GM12878 (cell line): ENCODE measurements at regions of chr5 and their contacts with region 1.

Region 1: GRCh38 chr5:38193015-38193581 is 65.3 kb upstream of the EGFLAM start:
- DNase-seq: no peak
- ATAC-seq: peak; percentile 86
- H3K4me3 ChIP-seq: no peak overlapping the region
- H3K27ac ChIP-seq: no peak overlapping the region
- H3K4me1 ChIP-seq: no peaks in the 10 kb centered on the region
- H3K27me3 ChIP-seq: no peaks in the 10 kb centered on the region; a peak in 2 of 4 replicates
- CTCF ChIP-seq: peak; percentile 86 to 91 (median 87)
- EP300 ChIP-seq: no peak
- POLR2A ChIP-seq: no peak
- RAD21 ChIP-seq: peak; percentile 90

Region 2: GRCh38 chr5:37774912-37775483 is 418.1 kb before region 1 on chr5:
- CTCF ChIA-PET with region 1: interaction called, 11 read pairs
- POLR2A ChIA-PET with region 1: no interaction called
- RAD21 ChIA-PET with region 1: no interaction called
- SMC1A ChIA-PET with region 1: interaction called, 4 read pairs
- in situ Hi-C with region 1: no loop called
- intact Hi-C with region 1: loop called (anchors 2 kb)
- DNase-seq: peak; percentile 5
- ATAC-seq: no peak
- H3K4me3 ChIP-seq: no peak overlapping the region
- H3K27ac ChIP-seq: no peak overlapping the region
- H3K4me1 ChIP-seq: no peaks in the 10 kb centered on the region
- H3K27me3 ChIP-seq: no peaks in the 10 kb centered on the region
- CTCF ChIP-seq: peak; percentile 31 to 67 (median 56)
- EP300 ChIP-seq: no peak
- POLR2A ChIP-seq: no peak
- RAD21 ChIP-seq: peak; percentile 42

Region 3: GRCh38 chr5:37831821-37832534 is 361.1 kb before region 1 on chr5:
- CTCF ChIA-PET with region 1: interaction called, 52 read pairs
- POLR2A ChIA-PET with region 1: no interaction called
- RAD21 ChIA-PET with region 1: interaction called, 16 read pairs
- SMC1A ChIA-PET with region 1: interaction called, 22 read pairs
- in situ Hi-C with region 1: no loop called
- intact Hi-C with region 1: loop called (anchors 1 kb)
- DNase-seq: no peak
- ATAC-seq: no peak
- H3K4me3 ChIP-seq: no peak overlapping the region
- H3K27ac ChIP-seq: no peak overlapping the region
- H3K4me1 ChIP-seq: no peaks in the 10 kb centered on the region
- H3K27me3 ChIP-seq: peaks cover 13 to 16% of the 10 kb centered on the region in 2 experiments
- CTCF ChIP-seq: no peak
- EP300 ChIP-seq: no peak
- POLR2A ChIP-seq: no peak
- RAD21 ChIP-seq: no peak

Region 4: GRCh38 chr5:37837414-37838032 is 355.6 kb before region 1 on chr5:
- CTCF ChIA-PET with region 1: interaction called, 52 read pairs
- POLR2A ChIA-PET with region 1: no interaction called
- RAD21 ChIA-PET with region 1: interaction called, 16 read pairs
- SMC1A ChIA-PET with region 1: interaction called, 22 read pairs
- in situ Hi-C with region 1: loop called (anchors 5 kb)
- intact Hi-C with region 1: loop called (anchors 1 kb)
- DNase-seq: no peak
- ATAC-seq: peak; percentile 93
- H3K4me3 ChIP-seq: peak overlapping the region; percentile 38; the same call in 1 of the 2 replicates
- H3K27ac ChIP-seq: no peak overlapping the region
- H3K4me1 ChIP-seq: peaks cover 3% of the 10 kb centered on the region; the same call in 1 of the 2 replicates
- H3K27me3 ChIP-seq: peaks cover 21 to 32% of the 10 kb centered on the region in 2 experiments
- CTCF ChIP-seq: peak; percentile 85 to 94 (median 92)
- EP300 ChIP-seq: no peak
- POLR2A ChIP-seq: no peak
- RAD21 ChIP-seq: peak; percentile 93

Region 5: DNA sequence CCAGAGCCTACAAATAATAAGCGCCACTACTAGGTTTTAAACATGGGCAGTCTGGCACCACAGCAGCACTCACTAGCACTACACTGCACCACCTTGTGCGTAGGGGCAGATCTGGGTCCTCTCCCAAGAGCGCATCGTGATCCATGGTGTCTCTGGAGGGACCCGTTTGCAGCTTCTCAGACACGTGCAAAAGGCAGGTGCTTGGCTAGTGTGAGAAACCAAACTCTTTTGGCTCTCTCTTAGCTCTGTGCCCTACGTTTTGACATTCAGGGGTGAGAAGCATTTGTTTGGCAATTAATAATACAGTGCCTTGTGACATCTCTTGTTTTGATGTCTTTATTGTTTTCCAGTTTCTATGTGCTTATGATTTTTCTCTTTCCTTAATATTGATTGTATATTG is 10.1 kb before region 1 on chr5:
- CTCF ChIA-PET with region 1: interaction called, 10 read pairs
- POLR2A ChIA-PET with region 1: no interaction called
- RAD21 ChIA-PET with region 1: no interaction called
- SMC1A ChIA-PET with region 1: interaction called, 7 read pairs
- in situ Hi-C with region 1: no loop called
- intact Hi-C with region 1: no loop called
- DNase-seq: no peak
- ATAC-seq: no peak
- H3K4me3 ChIP-seq: no peak overlapping the region
- H3K27ac ChIP-seq: no peak overlapping the region
- H3K4me1 ChIP-seq: no peaks in the 10 kb centered on the region
- H3K27me3 ChIP-seq: peaks cover 0 to 3% of the 10 kb centered on the region in 2 experiments; a peak in 1 of 4 replicates
- CTCF ChIP-seq: no peak
- EP300 ChIP-seq: no peak
- POLR2A ChIP-seq: no peak
- RAD21 ChIP-seq: no peak

Region 6: DNA sequence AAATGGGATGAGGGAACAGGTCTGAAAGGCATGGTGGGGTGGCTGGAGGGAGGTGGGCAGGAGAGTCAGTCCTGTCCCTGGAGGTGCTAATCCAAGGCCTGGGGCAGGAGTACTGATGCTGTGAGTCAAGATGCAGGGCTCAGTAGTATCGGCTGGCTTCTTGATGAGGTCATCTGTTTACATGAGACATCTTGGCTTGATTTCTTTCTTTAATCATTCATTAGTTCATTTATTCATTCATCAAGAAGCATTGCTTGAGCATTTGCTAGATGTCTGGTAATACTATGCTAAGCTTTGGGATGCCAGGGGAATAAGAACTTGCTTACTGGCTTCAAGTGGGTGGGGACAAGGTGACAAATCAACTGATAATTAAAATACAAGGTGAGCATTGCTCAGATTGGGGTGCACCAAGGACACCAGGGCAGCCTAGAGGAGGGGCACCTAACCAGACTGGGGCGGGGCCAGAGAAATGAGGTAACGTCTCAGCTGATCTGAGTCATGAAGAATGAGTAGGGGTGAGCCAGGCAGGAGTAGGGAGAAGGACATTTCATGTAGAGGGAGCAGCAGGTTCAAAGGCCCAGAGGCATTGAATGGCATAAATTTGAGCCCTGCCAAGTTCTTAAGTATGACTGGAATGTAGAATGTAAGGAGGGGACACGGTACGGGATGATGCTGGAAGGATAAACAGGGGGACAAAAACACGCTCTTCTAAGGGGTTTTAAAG is 154.1 kb after region 1 on chr5:
- CTCF ChIA-PET with region 1: no interaction called
- POLR2A ChIA-PET with region 1: no interaction called
- RAD21 ChIA-PET with region 1: no interaction called
- SMC1A ChIA-PET with region 1: no interaction called
- in situ Hi-C with region 1: no loop called
- intact Hi-C with region 1: no loop called
- DNase-seq: no peak
- ATAC-seq: no peak
- H3K4me3 ChIP-seq: no peak overlapping the region
- H3K27ac ChIP-seq: no peak overlapping the region
- H3K4me1 ChIP-seq: no peaks in the 10 kb centered on the region
- H3K27me3 ChIP-seq: no peaks in the 10 kb centered on the region
- CTCF ChIP-seq: no peak
- EP300 ChIP-seq: no peak
- POLR2A ChIP-seq: no peak
- RAD21 ChIP-seq: no peak

Region 7: GRCh38 chr5:38563624-38564023 is 370.5 kb after region 1 on chr5:
- CTCF ChIA-PET with region 1: no interaction called
- POLR2A ChIA-PET with region 1: no interaction called
- RAD21 ChIA-PET with region 1: no interaction called
- SMC1A ChIA-PET with region 1: no interaction called
- in situ Hi-C with region 1: no loop called
- intact Hi-C with region 1: no loop called
- DNase-seq: no peak
- ATAC-seq: no peak
- H3K4me3 ChIP-seq: no peak overlapping the region
- H3K27ac ChIP-seq: no peak overlapping the region
- H3K4me1 ChIP-seq: no peaks in the 10 kb centered on the region
- H3K27me3 ChIP-seq: no peaks in the 10 kb centered on the region
- CTCF ChIP-seq: no peak
- EP300 ChIP-seq: no peak
- POLR2A ChIP-seq: no peak
- RAD21 ChIP-seq: no peak

Region 8: GRCh38 chr5:39399135-39400036 is 1206.3 kb after region 1 on chr5:
- CTCF ChIA-PET with region 1: no interaction called
- POLR2A ChIA-PET with region 1: no interaction called
- RAD21 ChIA-PET with region 1: no interaction called
- SMC1A ChIA-PET with region 1: no interaction called
- in situ Hi-C with region 1: no loop called
- intact Hi-C with region 1: no loop called
- DNase-seq: no peak
- ATAC-seq: no peak
- H3K4me3 ChIP-seq: no peak overlapping the region
- H3K27ac ChIP-seq: no peak overlapping the region
- H3K4me1 ChIP-seq: no peaks in the 10 kb centered on the region
- H3K27me3 ChIP-seq: no peaks in the 10 kb centered on the region
- CTCF ChIP-seq: no peak
- EP300 ChIP-seq: no peak
- POLR2A ChIP-seq: no peak
- RAD21 ChIP-seq: no peak